Thyroid gland (tissue), 4 donors: ENCODE measurements at regions of chr22 and their contacts with region 1.

Region 1: DNA sequence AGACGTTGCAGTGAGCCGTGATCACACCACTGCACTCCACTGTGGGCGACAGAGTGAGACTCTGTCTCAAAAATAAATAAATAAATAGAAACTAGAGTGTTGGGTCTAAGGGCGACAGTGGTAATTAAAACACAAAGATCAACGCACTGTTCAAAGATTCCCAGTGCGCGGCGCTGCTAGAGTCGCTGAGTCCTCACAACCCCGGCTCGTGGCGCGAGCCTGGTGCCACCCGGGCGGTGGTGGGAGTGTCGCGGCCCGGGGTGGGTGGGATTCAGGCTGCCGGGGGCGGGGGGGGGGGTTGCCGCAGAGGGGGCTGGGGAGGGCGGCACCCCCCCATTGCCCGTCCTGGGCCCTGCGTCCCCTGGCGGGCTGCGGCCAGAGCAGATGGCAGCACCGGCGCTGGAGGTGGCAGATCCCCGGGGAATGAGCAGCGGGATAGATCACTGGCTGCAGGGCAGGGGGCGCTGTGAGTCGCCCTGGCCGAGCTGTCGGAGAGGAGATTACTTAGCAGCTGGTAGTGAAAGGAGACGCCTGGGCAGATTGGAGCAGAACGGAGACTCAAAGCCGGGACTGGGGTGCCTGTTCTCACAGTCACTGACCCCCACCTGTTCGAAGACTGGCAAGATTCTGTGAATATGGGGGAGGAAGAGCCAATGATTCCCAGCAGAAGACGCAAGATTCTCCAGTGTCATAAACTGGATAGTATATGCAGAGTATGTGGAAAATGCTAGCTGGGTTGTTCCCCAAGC is 30.2 kb upstream of the APOBEC3A start:
- DNase-seq: peak; percentile 80 to 88
- H3K4me3 ChIP-seq: no peak overlapping the region
- H3K27ac ChIP-seq: peak overlapping the region; percentile 64 to 95 (median 85)
- H3K4me1 ChIP-seq: peaks cover 27 to 46% of the 10 kb centered on the region in 2 donors
- H3K27me3 ChIP-seq: no peaks in the 10 kb centered on the region
- CTCF ChIP-seq: peak in 5 of 6 experiments; percentile 26 to 73 (median 62)
- POLR2A ChIP-seq: peak in 1 of 2 donors; percentile 37

Region 2: GRCh38 chr22:38737302-38738060 is 189.7 kb before region 1 on chr22:
- intact Hi-C with region 1: no loop called
- DNase-seq: no peak
- H3K4me3 ChIP-seq: no peak overlapping the region
- H3K27ac ChIP-seq: no peak overlapping the region
- H3K4me1 ChIP-seq: peaks cover 22 to 38% of the 10 kb centered on the region in 2 donors
- H3K27me3 ChIP-seq: no peaks in the 10 kb centered on the region
- CTCF ChIP-seq: no peak
- POLR2A ChIP-seq: no peak

Region 3: DNA sequence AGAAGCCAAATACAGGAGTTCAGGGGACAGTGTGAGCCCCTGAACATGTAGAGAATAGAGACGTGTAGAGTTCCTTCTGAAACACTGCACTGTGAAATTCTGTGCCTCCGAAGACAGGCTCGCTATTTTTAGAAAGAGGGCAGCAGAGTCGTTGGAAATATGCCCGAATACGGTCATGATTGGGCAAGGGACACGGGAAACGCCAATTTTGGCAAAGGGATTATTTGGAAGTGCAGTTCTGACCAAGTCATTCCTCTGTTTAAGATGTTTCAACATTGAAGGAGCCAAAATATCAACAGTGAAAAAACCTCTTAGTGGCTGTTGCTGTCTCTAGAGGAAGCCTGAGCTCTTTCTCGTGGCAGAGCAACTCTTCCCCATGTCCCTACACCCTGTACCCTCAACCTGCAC is 45.7 kb before region 1 on chr22:
- intact Hi-C with region 1: loop called (anchors 5 kb)
- DNase-seq: peak; percentile 80 to 84
- H3K4me3 ChIP-seq: no peak overlapping the region
- H3K27ac ChIP-seq: peak overlapping the region; percentile 89 to 95 (median 89)
- H3K4me1 ChIP-seq: peaks cover 16 to 26% of the 10 kb centered on the region in 2 donors
- H3K27me3 ChIP-seq: no peaks in the 10 kb centered on the region
- CTCF ChIP-seq: peak in 4 of 6 experiments; percentile 13 to 40 (median 26)
- POLR2A ChIP-seq: peak in 1 of 2 donors; percentile 78

Region 4: DNA sequence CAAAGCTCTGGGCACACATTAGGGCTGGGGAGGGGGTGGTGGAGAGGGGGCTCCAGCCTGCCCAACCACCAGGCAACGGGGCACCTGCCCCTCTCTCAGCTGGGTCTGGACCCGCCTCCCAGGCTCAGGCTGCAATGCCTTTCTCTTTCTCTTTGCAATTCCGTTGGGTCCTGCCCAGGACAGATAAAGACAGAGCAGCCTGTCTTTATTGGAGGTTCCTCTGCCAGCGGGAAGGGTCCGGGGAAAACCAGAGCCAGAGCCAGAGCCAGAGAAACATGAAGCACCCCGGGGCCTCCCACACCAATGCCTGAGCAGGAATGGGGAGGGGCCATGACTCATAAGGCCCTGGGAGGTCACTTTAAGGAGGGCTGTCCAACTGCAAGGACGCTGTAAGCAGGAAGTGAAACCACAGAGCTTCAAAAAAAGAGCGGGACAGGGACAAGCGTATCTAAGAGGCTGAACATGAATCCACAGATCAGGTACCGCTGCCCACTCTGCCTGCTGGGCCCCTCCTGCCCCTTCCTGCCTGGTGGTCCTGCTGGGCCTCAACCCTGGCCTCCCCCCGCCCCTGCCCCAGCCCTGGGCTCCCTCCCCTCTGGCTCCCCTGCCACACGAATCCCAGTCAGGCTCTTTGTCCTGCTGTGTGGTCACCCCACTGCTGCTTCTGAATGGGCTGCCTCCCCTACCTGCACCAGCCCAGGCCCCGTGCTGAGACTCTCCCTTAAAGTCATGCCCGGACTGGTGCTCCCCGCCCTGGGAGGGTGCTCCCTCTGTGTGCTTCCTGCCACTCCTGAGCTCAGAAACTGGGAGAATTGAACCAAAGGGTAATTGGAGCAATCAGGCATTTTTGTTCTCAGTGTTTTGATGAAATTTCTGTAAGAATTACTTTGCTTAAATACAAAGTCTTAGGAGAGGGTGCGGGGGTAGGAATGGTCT is 55.1 kb after region 1 on chr22 and contains the start of gene APOBEC3B:
- intact Hi-C with region 1: loop called (anchors 10 kb)
- DNase-seq: peak; percentile 93 to 94
- H3K4me3 ChIP-seq: peak within 1 kb of the TSS in 1 of 3 donors; percentile 14
- H3K27ac ChIP-seq: peak within 1 kb of the TSS in 2 of 3 donors; percentile 82 to 93
- H3K4me1 ChIP-seq: peaks cover 0 to 26% of the 10 kb centered on the region in 2 donors
- H3K27me3 ChIP-seq: no peaks in the 10 kb centered on the region
- CTCF ChIP-seq: no peak
- POLR2A ChIP-seq: no peak
- total RNA-seq, gene APOBEC3B: 1.7 to 5.1 (median 2.9) TPM in 3 of 4 donors, not detected in the other